Left ventricle myocardium inferior (tissue), 1 donor: ENCODE measurements at regions of chr2 and their contacts with region 1.

Region 1: GRCh38 chr2:203280428-203281064 is 41.7 kb downstream of the CYP20A1 start:
- DNase-seq: no peak
- H3K4me3 ChIP-seq: no peak overlapping the region
- H3K27ac ChIP-seq: no peak overlapping the region
- H3K4me1 ChIP-seq: no peaks in the 10 kb centered on the region
- H3K27me3 ChIP-seq: no peaks in the 10 kb centered on the region
- CTCF ChIP-seq: no peak

Region 2: GRCh38 chr2:203177361-203177760 is 103.2 kb before region 1 on chr2:
- intact Hi-C with region 1: no loop called
- DNase-seq: no peak
- H3K4me3 ChIP-seq: no peak overlapping the region
- H3K27ac ChIP-seq: no peak overlapping the region
- H3K4me1 ChIP-seq: no peaks in the 10 kb centered on the region
- H3K27me3 ChIP-seq: no peaks in the 10 kb centered on the region
- CTCF ChIP-seq: no peak

Region 3: DNA sequence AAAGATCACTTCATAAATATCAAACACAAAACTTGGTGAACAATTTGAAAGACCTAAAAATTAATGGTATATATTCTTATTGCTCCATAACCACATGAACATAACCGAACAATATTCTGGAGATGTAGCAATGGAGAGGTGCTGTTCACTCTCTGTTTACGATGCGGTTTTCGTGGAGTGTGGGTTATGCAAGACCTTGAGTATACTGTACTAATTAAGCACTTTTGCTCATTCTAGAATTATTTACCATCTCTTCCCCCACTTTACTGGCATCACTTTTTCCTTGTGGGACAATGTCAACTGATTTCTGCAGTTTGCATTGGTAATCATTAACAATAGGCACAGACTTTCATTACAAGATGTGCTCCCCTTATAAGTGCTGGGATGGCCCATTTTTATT is 157.0 kb after region 1 on chr2:
- intact Hi-C with region 1: loop called (anchors 10 kb)
- DNase-seq: no peak
- H3K4me3 ChIP-seq: no peak overlapping the region
- H3K27ac ChIP-seq: no peak overlapping the region
- H3K4me1 ChIP-seq: peaks cover 33% of the 10 kb centered on the region
- H3K27me3 ChIP-seq: no peaks in the 10 kb centered on the region
- CTCF ChIP-seq: no peak